Naive thymus-derived CD4-positive, alpha-beta T cell (primary cell): ENCODE measurements at regions of chr21 and their contacts with region 1.

Region 1: GRCh38 chr21:17780539-17780938 is 38.6 kb downstream of the C21orf91 start:
- DNase-seq: peak in 5 of 9 donors; percentile 36 to 64 (median 38)
- ATAC-seq: peak; percentile 64
- H3K4me3 ChIP-seq: peak overlapping the region; percentile 0
- H3K4me3 Mint-ChIP-seq: peak overlapping the region; percentile 26 to 87 (median 66)
- H3K27ac ChIP-seq: peak overlapping the region; percentile 25
- H3K27ac Mint-ChIP-seq: peak overlapping the region; percentile 42 to 96 (median 90)
- H3K4me1 ChIP-seq: peaks cover 62 to 71% of the 10 kb centered on the region in 2 donors
- H3K4me1 Mint-ChIP-seq: peaks cover 58 to 84% (median 74%) of the 10 kb centered on the region in 7 donors
- H3K27me3 ChIP-seq: no peaks in the 10 kb centered on the region
- H3K27me3 Mint-ChIP-seq: no peaks in the 10 kb centered on the region

Region 2: GRCh38 chr21:17512253-17513213 is 268.0 kb before region 1 on chr21 and contains the start of gene CXADR:
- CTCF ChIA-PET with region 1: no interaction called
- POLR2A ChIA-PET with region 1: no interaction called
- intact Hi-C with region 1: loop called in 1 of 2 experiments (anchors 5 kb)
- DNase-seq: peak; percentile 73 to 86 (median 84)
- ATAC-seq: peak; percentile 89
- H3K4me3 ChIP-seq: peak within 1 kb of the TSS; percentile 66
- H3K4me3 Mint-ChIP-seq: peak within 1 kb of the TSS; percentile 81 to 92 (median 90)
- H3K27ac ChIP-seq: peak within 1 kb of the TSS; percentile 59
- H3K27ac Mint-ChIP-seq: peak within 1 kb of the TSS; percentile 30 to 92 (median 55)
- H3K4me1 ChIP-seq: peaks cover 11% of the 10 kb centered on the region in 2 donors
- H3K4me1 Mint-ChIP-seq: peaks cover 15 to 26% (median 22%) of the 10 kb centered on the region in 7 donors
- H3K27me3 ChIP-seq: no peaks in the 10 kb centered on the region
- H3K27me3 Mint-ChIP-seq: peaks cover 0 to 60% (median 3%) of the 10 kb centered on the region in 5 donors
- total RNA-seq, gene CXADR: 0.12 to 1.8 (median 0.51) TPM

Region 3: GRCh38 chr21:17679002-17679600 is 101.4 kb before region 1 on chr21:
- CTCF ChIA-PET with region 1: interaction called, 3 read pairs
- POLR2A ChIA-PET with region 1: no interaction called
- intact Hi-C with region 1: loop called in 1 of 2 experiments (anchors 2 kb)
- DNase-seq: peak in 7 of 9 donors; percentile 50 to 76 (median 60)
- ATAC-seq: peak; percentile 96
- H3K4me3 ChIP-seq: no peak overlapping the region
- H3K4me3 Mint-ChIP-seq: no peak overlapping the region
- H3K27ac ChIP-seq: no peak overlapping the region
- H3K27ac Mint-ChIP-seq: no peak overlapping the region
- H3K4me1 ChIP-seq: no peaks in the 10 kb centered on the region
- H3K4me1 Mint-ChIP-seq: no peaks in the 10 kb centered on the region
- H3K27me3 ChIP-seq: no peaks in the 10 kb centered on the region
- H3K27me3 Mint-ChIP-seq: peaks cover 0 to 4% (median 0%) of the 10 kb centered on the region in 5 donors

Region 4: DNA sequence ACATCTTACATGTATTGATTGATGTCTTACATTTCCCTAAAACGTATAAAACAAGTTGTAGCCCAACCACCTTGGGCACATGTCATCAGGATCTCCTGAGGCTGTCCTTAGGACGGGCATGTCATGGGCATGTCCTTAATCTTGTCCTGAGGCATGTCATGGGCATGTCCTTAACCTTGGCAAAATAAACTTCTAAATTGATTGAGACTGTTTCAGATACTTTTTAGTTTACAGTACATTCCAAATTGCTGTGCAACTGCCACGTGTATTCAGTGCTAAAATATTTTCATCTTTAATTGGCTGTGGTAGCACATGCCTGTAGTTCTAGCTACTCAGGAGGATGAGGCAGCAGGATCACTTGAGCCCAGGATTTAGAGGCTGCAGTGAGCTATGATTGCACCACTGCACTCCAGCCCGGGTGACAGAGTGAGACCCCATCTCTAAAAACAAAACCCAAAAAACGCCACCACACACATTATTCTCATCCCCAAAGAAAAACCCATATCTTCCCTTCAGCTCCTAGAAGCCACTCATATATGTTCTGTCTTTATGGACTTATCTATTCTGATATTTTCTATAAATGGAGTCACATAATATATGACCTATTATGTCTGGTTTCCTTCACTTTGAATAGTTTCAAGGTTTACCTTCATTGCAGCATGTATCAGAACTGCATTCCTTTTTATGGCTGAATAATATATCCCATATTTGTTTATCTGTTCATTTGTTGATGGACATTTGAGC is 71.8 kb before region 1 on chr21:
- CTCF ChIA-PET with region 1: no interaction called
- POLR2A ChIA-PET with region 1: no interaction called
- intact Hi-C with region 1: loop called in 1 of 2 experiments (anchors 5 kb)
- DNase-seq: no peak
- ATAC-seq: no peak
- H3K4me3 ChIP-seq: no peak overlapping the region
- H3K4me3 Mint-ChIP-seq: peak overlapping the region in 1 of 10 donors; percentile 18
- H3K27ac ChIP-seq: no peak overlapping the region
- H3K27ac Mint-ChIP-seq: no peak overlapping the region
- H3K4me1 ChIP-seq: no peaks in the 10 kb centered on the region
- H3K4me1 Mint-ChIP-seq: peaks cover 0 to 29% (median 0%) of the 10 kb centered on the region in 7 donors
- H3K27me3 ChIP-seq: no peaks in the 10 kb centered on the region
- H3K27me3 Mint-ChIP-seq: no peaks in the 10 kb centered on the region

Region 5: GRCh38 chr21:17759511-17760178 is 20.9 kb before region 1 on chr21:
- CTCF ChIA-PET with region 1: no interaction called
- POLR2A ChIA-PET with region 1: no interaction called
- intact Hi-C with region 1: loop called in 1 of 2 experiments (anchors 2 kb)
- DNase-seq: no peak
- ATAC-seq: no peak
- H3K4me3 ChIP-seq: no peak overlapping the region
- H3K4me3 Mint-ChIP-seq: no peak overlapping the region
- H3K27ac ChIP-seq: no peak overlapping the region
- H3K27ac Mint-ChIP-seq: no peak overlapping the region
- H3K4me1 ChIP-seq: no peaks in the 10 kb centered on the region
- H3K4me1 Mint-ChIP-seq: peaks cover 0 to 7% (median 0%) of the 10 kb centered on the region in 7 donors
- H3K27me3 ChIP-seq: no peaks in the 10 kb centered on the region
- H3K27me3 Mint-ChIP-seq: no peaks in the 10 kb centered on the region

Region 6: GRCh38 chr21:17793246-17794123 is 12.9 kb after region 1 on chr21:
- CTCF ChIA-PET with region 1: interaction called, 8 read pairs
- POLR2A ChIA-PET with region 1: interaction called, 71 read pairs
- intact Hi-C with region 1: loop called (anchors 1 kb)
- DNase-seq: peak in 2 of 9 donors; percentile 28 to 37
- ATAC-seq: peak; percentile 65
- H3K4me3 ChIP-seq: peak overlapping the region; percentile 36
- H3K4me3 Mint-ChIP-seq: peak overlapping the region; percentile 38 to 86 (median 80)
- H3K27ac ChIP-seq: peak overlapping the region; percentile 73
- H3K27ac Mint-ChIP-seq: peak overlapping the region; percentile 77 to 92 (median 87)
- H3K4me1 ChIP-seq: peaks cover 36 to 47% of the 10 kb centered on the region in 2 donors
- H3K4me1 Mint-ChIP-seq: peaks cover 23 to 92% (median 66%) of the 10 kb centered on the region in 7 donors
- H3K27me3 ChIP-seq: no peaks in the 10 kb centered on the region
- H3K27me3 Mint-ChIP-seq: no peaks in the 10 kb centered on the region

Region 7: GRCh38 chr21:17819114-17819876 is 38.8 kb after region 1 on chr21 and contains the start of gene C21orf91:
- CTCF ChIA-PET with region 1: interaction called, 5 read pairs
- POLR2A ChIA-PET with region 1: interaction called, 148 read pairs
- intact Hi-C with region 1: loop called (anchors 1 kb)
- DNase-seq: peak; percentile 78 to 92 (median 91)
- ATAC-seq: peak; percentile 94
- H3K4me3 ChIP-seq: peak within 1 kb of the TSS; percentile 71
- H3K4me3 Mint-ChIP-seq: peak within 1 kb of the TSS; percentile 94 to 100 (median 97)
- H3K27ac ChIP-seq: peak within 1 kb of the TSS; percentile 89
- H3K27ac Mint-ChIP-seq: peak within 1 kb of the TSS; percentile 96 to 100 (median 100)
- H3K4me1 ChIP-seq: peaks cover 26 to 34% of the 10 kb centered on the region in 2 donors
- H3K4me1 Mint-ChIP-seq: peaks cover 28 to 63% (median 50%) of the 10 kb centered on the region in 7 donors
- H3K27me3 ChIP-seq: no peaks in the 10 kb centered on the region
- H3K27me3 Mint-ChIP-seq: no peaks in the 10 kb centered on the region
- total RNA-seq, gene C21orf91: 26.0 to 59.8 (median 57.7) TPM

Region 8: DNA sequence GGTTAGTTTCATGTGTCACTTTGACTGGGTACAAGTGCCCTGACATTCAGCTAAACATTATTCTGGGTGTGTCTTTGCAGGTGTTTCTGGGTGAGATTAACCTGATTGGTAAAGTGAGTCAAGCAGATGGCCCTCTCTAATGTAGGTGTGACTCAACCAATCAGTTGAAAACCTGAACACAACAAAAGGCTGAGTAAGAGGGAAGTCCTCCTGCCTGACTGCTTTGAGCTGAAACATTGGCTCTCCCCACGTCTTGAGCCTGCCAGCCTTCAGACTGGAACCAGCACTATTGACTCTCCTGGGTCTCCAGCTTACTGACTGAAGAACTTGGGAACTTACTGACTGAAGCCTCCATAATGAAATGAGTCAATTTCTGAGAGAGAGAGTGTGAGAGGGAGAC is 108.6 kb after region 1 on chr21:
- CTCF ChIA-PET with region 1: no interaction called
- POLR2A ChIA-PET with region 1: no interaction called
- intact Hi-C with region 1: no loop called
- DNase-seq: no peak
- ATAC-seq: no peak
- H3K4me3 ChIP-seq: no peak overlapping the region
- H3K4me3 Mint-ChIP-seq: no peak overlapping the region
- H3K27ac ChIP-seq: no peak overlapping the region
- H3K27ac Mint-ChIP-seq: no peak overlapping the region
- H3K4me1 ChIP-seq: no peaks in the 10 kb centered on the region
- H3K4me1 Mint-ChIP-seq: no peaks in the 10 kb centered on the region
- H3K27me3 ChIP-seq: no peaks in the 10 kb centered on the region
- H3K27me3 Mint-ChIP-seq: peaks cover 0 to 4% (median 0%) of the 10 kb centered on the region in 5 donors